RWPE1 (cell line): ENCODE measurements at regions of chr20 and their contacts with region 1.

Region 1: DNA sequence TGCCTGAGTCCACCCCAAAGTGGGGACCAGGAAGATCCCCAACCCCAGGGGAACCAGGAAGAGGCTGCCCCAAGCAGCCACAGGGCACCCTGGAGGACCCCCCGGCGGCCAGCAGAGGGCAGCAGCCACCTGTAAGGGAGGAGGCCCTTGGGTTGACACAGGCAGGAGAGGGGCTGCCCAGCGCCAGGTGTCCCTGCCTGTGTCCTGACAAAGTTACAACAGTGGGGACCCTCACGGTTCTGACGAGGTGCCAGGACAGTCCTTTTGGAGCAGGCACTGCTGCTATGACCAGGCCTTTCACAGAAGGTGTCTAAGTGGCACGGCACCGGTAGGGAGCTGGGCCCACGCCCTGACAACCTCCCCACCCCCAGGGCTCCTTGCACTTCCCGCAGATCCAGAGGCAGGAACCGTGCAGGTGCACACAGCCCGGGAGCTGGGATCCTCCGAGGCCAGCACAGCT is 176.7 kb downstream of the BMP7 start:
- DNase-seq: peak; percentile 87
- H3K27ac ChIP-seq: no peak overlapping the region
- CTCF ChIP-seq: peak; percentile 100

Region 2: GRCh38 chr20:57266291-57267157 is 176.8 kb after region 1 on chr20 and contains the start of gene BMP7:
- CTCF ChIA-PET with region 1: interaction called, 13 read pairs
- POLR2A ChIA-PET with region 1: no interaction called
- DNase-seq: no peak
- H3K27ac ChIP-seq: no peak within 1 kb of the TSS
- CTCF ChIP-seq: no peak

Region 3: GRCh38 chr20:57329608-57330221 is 240.0 kb after region 1 on chr20 and contains the start of gene SPO11:
- CTCF ChIA-PET with region 1: interaction called, 154 read pairs
- POLR2A ChIA-PET with region 1: no interaction called
- DNase-seq: no peak
- H3K27ac ChIP-seq: no peak within 1 kb of the TSS
- CTCF ChIP-seq: no peak

Region 4: GRCh38 chr20:57346477-57346876 is 256.8 kb after region 1 on chr20:
- CTCF ChIA-PET with region 1: interaction called, 108 read pairs
- POLR2A ChIA-PET with region 1: interaction called, 3 read pairs
- DNase-seq: peak; percentile 64
- H3K27ac ChIP-seq: no peak overlapping the region
- CTCF ChIP-seq: peak; percentile 96

Region 5: GRCh38 chr20:57526087-57526884 is 436.6 kb after region 1 on chr20:
- CTCF ChIA-PET with region 1: no interaction called
- POLR2A ChIA-PET with region 1: no interaction called
- DNase-seq: no peak
- H3K27ac ChIP-seq: no peak overlapping the region
- CTCF ChIP-seq: no peak